Heart left ventricle (tissue), 16 donors: ENCODE measurements at regions of chr19 and their contacts with region 1.

Region 1: DNA sequence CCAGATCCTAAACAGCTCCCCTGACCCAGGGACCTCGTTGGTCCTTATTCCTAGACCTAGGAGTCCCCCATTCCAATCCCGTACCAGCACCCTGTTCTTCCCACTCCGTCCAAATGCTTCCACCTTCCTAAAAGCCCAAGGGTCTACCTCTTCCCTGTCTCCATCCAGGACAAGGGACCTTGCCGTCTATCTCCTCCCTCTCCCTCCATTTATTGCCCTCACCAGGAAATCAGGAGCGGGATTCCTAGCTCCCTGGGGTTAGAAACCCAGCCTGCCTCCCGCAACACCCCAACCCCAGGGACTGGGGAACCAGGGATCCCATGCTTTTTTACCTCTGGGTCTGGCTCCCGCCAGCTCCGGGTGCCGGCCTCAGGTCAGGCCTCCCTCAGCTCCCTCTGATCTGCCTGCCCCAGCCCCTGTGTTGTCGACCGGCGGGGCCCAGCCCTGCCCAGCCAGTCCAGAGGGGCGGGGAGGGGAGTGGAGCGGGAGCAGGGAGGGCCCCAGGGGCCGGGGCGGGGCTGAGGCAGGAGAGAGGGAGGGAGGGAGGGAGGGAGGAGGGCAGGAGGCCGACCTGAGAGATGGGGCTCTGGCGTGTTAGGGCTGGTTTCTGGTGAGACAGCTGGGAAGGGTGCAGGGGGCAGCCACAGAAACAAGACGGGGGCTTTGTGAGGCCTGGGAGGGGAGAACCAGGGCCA is at the start of gene B3GNT8:
- DNase-seq: peak; percentile 89 to 93 (median 92)
- ATAC-seq: peak; percentile 70 to 87 (median 85)
- H3K4me3 ChIP-seq: peak within 1 kb of the TSS; percentile 16 to 84 (median 62)
- H3K27ac ChIP-seq: peak within 1 kb of the TSS; percentile 54 to 95 (median 92)
- H3K4me1 ChIP-seq: peaks cover 7 to 82% (median 52%) of the 10 kb centered on the region in 12 donors
- H3K27me3 ChIP-seq: no peaks in the 10 kb centered on the region
- CTCF ChIP-seq: no peak
- POLR2A ChIP-seq: peak; percentile 30 to 84
- total RNA-seq, gene B3GNT8: 6.4 to 11.5 (median 9.4) TPM

Region 2: GRCh38 chr19:41321600-41322270 is 105.4 kb before region 1 on chr19:
- intact Hi-C with region 1: loop called in 4 of 10 experiments (anchors 5 to 10 kb)
- DNase-seq: peak in 4 of 5 donors; percentile 50 to 60 (median 60)
- ATAC-seq: no peak
- H3K4me3 ChIP-seq: no peak overlapping the region
- H3K27ac ChIP-seq: peak overlapping the region; percentile 23 to 95 (median 89)
- H3K4me1 ChIP-seq: peaks cover 4 to 60% (median 54%) of the 10 kb centered on the region in 12 donors
- H3K27me3 ChIP-seq: no peaks in the 10 kb centered on the region
- CTCF ChIP-seq: peak; percentile 52 to 81 (median 67)
- POLR2A ChIP-seq: no peak

Region 3: GRCh38 chr19:41327576-41328156 is 99.4 kb before region 1 on chr19:
- intact Hi-C with region 1: loop called in 3 of 10 experiments (anchors 5 kb)
- DNase-seq: peak; percentile 78 to 91 (median 84)
- ATAC-seq: peak; percentile 8 to 57 (median 38)
- H3K4me3 ChIP-seq: peak overlapping the region in 10 of 12 donors; percentile 18 to 49 (median 44)
- H3K27ac ChIP-seq: peak overlapping the region; percentile 66 to 95 (median 88)
- H3K4me1 ChIP-seq: peaks cover 4 to 95% (median 63%) of the 10 kb centered on the region in 12 donors
- H3K27me3 ChIP-seq: no peaks in the 10 kb centered on the region
- CTCF ChIP-seq: no peak
- POLR2A ChIP-seq: no peak

Region 4: GRCh38 chr19:41409288-41409687 is 17.8 kb before region 1 on chr19:
- intact Hi-C with region 1: loop called in 2 of 10 experiments (anchors 2 kb)
- DNase-seq: peak in 4 of 5 donors; percentile 56 to 66 (median 58)
- ATAC-seq: peak; percentile 69 to 75 (median 73)
- H3K4me3 ChIP-seq: no peak overlapping the region
- H3K27ac ChIP-seq: peak overlapping the region; percentile 55 to 88 (median 78)
- H3K4me1 ChIP-seq: peaks cover 0 to 82% (median 68%) of the 10 kb centered on the region in 12 donors
- H3K27me3 ChIP-seq: no peaks in the 10 kb centered on the region
- CTCF ChIP-seq: no peak
- POLR2A ChIP-seq: no peak